T-cell (primary cell): ENCODE measurements at regions of chr19 and their contacts with region 1.

Region 1: GRCh38 chr19:32570081-32570785 is 10.8 kb upstream of the PDCD5 start:
- DNase-seq: peak; percentile 11 to 76 (median 49)
- ATAC-seq: peak; percentile 64 to 92 (median 69)
- H3K4me3 ChIP-seq: no peak overlapping the region
- H3K4me3 Mint-ChIP-seq: peak overlapping the region in 1 of 3 donors; percentile 22
- H3K27ac ChIP-seq: no peak overlapping the region
- H3K27ac Mint-ChIP-seq: peak overlapping the region in 1 of 2 donors; percentile 36
- H3K4me1 ChIP-seq: peaks cover 2 to 18% of the 10 kb centered on the region in 2 experiments
- H3K4me1 Mint-ChIP-seq: peaks cover 13 to 21% (median 16%) of the 10 kb centered on the region in 3 donors
- H3K27me3 ChIP-seq: peaks cover 0 to 29% of the 10 kb centered on the region in 2 experiments
- H3K27me3 Mint-ChIP-seq: peaks cover 6 to 16% of the 10 kb centered on the region in 2 donors

Region 2: DNA sequence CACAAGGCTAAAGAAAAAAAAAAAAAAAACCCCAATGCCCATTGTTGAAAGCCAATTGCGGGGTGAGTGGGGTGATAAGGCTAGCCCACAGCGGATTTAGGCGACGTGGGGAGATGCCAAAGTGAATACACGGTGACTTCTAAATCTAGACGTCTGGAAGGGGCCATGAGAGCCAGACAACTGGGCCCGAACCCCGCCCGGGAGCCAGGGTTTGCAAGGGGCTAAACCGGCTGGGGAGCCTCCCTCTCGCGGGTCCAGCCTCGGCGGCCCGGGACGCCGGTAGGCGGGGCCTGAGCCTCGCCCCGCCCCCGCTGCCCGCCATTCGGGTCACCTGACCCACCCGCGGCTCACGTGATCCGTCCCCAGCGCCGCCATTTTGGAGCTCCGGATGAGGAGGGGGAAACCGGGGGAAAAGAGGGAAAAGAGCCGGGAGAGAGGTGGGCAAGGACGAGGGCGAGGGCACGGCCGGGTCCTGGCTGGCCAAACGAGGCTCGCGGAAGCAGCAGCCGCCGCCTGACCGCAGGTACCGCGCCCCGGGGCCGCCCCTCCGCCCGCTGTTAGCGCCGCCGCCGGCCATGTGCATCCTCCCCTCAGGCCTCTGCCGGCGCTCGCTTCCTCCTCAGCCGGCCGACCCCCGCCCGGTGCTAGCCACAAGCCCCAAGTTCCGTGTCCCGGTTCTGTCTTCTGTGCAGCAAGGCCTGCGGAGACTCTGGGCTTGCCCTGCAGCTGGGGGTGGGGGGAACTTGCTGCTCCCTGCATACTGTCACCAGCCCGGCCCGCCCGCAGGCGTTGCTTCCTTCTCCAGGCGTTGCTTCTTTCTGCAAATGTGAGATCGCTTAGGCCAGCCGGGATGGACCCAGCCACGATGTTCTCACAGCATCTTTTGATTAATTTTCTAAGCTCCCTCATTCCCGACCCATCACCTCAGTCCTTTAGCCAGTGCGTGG is 224.7 kb before region 1 on chr19 and contains the start of gene ZNF507:
- CTCF ChIA-PET with region 1: interaction called in 1 of 2 experiments, 12 read pairs
- POLR2A ChIA-PET with region 1: interaction called in 1 of 2 experiments, 3 read pairs
- DNase-seq: peak; percentile 34 to 85 (median 71)
- ATAC-seq: peak; percentile 85 to 91 (median 88)
- H3K4me3 ChIP-seq: peak within 1 kb of the TSS; percentile 78 to 89
- H3K4me3 Mint-ChIP-seq: peak within 1 kb of the TSS; percentile 86 to 98 (median 95)
- H3K27ac ChIP-seq: peak within 1 kb of the TSS; percentile 61
- H3K27ac Mint-ChIP-seq: peak within 1 kb of the TSS; percentile 93
- H3K4me1 ChIP-seq: peaks cover 7 to 17% of the 10 kb centered on the region in 2 experiments
- H3K4me1 Mint-ChIP-seq: peaks cover 38 to 48% (median 45%) of the 10 kb centered on the region in 3 donors
- H3K27me3 ChIP-seq: peaks cover 0 to 9% of the 10 kb centered on the region in 2 experiments
- H3K27me3 Mint-ChIP-seq: peaks cover 0 to 7% of the 10 kb centered on the region in 2 donors
- total RNA-seq, gene ZNF507: 32.6 to 38.2 (median 35.9) TPM

Region 3: GRCh38 chr19:32543107-32543900 is 26.9 kb before region 1 on chr19:
- CTCF ChIA-PET with region 1: no interaction called
- POLR2A ChIA-PET with region 1: no interaction called
- DNase-seq: no peak
- ATAC-seq: no peak
- H3K4me3 ChIP-seq: no peak overlapping the region
- H3K4me3 Mint-ChIP-seq: no peak overlapping the region
- H3K27ac ChIP-seq: no peak overlapping the region
- H3K27ac Mint-ChIP-seq: no peak overlapping the region
- H3K4me1 ChIP-seq: no peaks in the 10 kb centered on the region
- H3K4me1 Mint-ChIP-seq: peaks cover 0 to under 1% (median 0%) of the 10 kb centered on the region in 3 donors
- H3K27me3 ChIP-seq: peaks cover 0 to 2% of the 10 kb centered on the region in 2 experiments
- H3K27me3 Mint-ChIP-seq: peaks cover 4 to 9% of the 10 kb centered on the region in 2 donors

Region 4: GRCh38 chr19:32662186-32662585 is 92.0 kb after region 1 on chr19:
- CTCF ChIA-PET with region 1: no interaction called
- POLR2A ChIA-PET with region 1: no interaction called
- DNase-seq: no peak
- ATAC-seq: no peak
- H3K4me3 ChIP-seq: no peak overlapping the region
- H3K4me3 Mint-ChIP-seq: no peak overlapping the region
- H3K27ac ChIP-seq: no peak overlapping the region
- H3K27ac Mint-ChIP-seq: no peak overlapping the region
- H3K4me1 ChIP-seq: peaks cover 0 to 6% of the 10 kb centered on the region in 2 experiments
- H3K4me1 Mint-ChIP-seq: peaks cover 11 to 17% (median 12%) of the 10 kb centered on the region in 3 donors
- H3K27me3 ChIP-seq: no peaks in the 10 kb centered on the region
- H3K27me3 Mint-ChIP-seq: no peaks in the 10 kb centered on the region

Region 5: DNA sequence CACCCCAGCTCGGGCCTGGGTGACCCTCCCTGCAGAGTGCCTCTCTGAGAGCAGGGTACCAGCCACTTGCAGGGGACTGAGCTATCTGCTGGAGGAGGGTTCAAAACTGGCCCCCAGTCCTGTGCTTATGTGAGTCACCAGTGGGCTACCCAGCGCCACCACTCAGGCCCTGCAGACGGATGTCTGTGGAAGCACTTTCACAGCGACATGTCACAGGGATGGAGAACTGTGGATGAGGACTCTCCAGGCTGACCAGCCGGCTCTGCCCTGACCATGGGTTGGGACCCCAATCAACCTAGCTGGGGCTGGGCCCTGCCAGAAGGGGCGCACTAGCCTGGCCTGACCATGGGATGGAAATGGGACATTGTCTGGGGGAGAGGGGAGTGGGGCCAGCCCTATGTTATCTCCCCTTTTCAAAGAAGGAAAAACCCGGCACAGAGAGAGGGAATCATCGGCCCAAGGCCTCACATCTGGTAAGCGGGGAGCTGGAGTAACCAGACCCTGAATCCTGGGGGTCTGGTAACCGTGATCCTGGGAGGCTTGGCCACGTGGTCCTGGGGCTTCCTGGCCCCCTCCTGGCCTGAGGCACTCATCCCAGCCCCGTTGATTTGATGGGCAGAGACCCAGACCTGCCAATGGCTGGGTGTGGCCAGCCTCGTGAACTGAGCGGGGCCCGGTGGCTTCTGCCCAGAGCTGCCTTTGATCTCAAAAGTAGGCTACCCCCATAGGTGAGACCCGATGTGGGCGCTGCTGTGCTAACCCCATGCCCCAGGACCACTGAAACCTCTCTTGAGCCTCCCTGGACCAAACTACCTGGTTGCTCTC is 666.5 kb after region 1 on chr19:
- CTCF ChIA-PET with region 1: interaction called in 1 of 2 experiments, 17 read pairs
- POLR2A ChIA-PET with region 1: no interaction called
- DNase-seq: no peak
- ATAC-seq: no peak
- H3K4me3 ChIP-seq: no peak overlapping the region
- H3K4me3 Mint-ChIP-seq: no peak overlapping the region
- H3K27ac ChIP-seq: no peak overlapping the region
- H3K27ac Mint-ChIP-seq: no peak overlapping the region
- H3K4me1 ChIP-seq: peaks cover 0 to 53% of the 10 kb centered on the region in 2 experiments
- H3K4me1 Mint-ChIP-seq: peaks cover 0 to 9% (median 6%) of the 10 kb centered on the region in 3 donors
- H3K27me3 ChIP-seq: peaks cover 2 to 40% of the 10 kb centered on the region in 2 experiments
- H3K27me3 Mint-ChIP-seq: peaks cover 0 to 6% of the 10 kb centered on the region in 2 donors